Posterior cingulate gyrus (tissue), 11 donors: ENCODE measurements at regions of chr2 and their contacts with region 1.

Region 1: DNA sequence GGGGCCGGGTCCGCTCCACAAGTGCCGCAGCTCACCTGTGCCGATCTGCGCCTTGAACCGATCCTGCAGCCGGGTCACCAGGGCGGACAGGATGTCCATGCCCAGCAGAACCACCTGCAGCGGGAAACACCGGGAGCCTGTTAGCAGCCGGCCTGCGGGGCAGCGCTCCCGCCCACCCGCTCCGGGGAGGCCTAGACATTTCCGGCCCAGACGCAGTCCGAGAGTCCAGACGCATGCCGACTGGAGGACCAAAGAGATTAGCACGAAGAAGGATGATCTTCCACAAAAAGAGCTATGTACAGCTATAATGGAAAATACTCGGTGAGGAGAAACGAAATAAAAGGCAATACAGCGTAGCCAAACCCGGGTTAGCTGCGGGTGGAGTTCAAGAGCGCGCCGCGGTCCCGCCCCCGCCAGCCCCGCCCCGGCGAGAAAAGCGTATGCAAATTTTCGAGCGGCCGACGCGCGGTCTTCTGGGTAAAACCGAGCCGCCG is 421 bp upstream of the RNU4ATAC start:
- DNase-seq: peak; percentile 73 to 96 (median 82)

Region 2: GRCh38 chr2:121400201-121400600 is 130.1 kb before region 1 on chr2:
- intact Hi-C with region 1: loop called (anchors 1 kb)
- DNase-seq: no peak

Region 3: GRCh38 chr2:121722479-121722878 is 192.2 kb after region 1 on chr2:
- intact Hi-C with region 1: loop called (anchors 2 kb)
- DNase-seq: no peak

Region 4: DNA sequence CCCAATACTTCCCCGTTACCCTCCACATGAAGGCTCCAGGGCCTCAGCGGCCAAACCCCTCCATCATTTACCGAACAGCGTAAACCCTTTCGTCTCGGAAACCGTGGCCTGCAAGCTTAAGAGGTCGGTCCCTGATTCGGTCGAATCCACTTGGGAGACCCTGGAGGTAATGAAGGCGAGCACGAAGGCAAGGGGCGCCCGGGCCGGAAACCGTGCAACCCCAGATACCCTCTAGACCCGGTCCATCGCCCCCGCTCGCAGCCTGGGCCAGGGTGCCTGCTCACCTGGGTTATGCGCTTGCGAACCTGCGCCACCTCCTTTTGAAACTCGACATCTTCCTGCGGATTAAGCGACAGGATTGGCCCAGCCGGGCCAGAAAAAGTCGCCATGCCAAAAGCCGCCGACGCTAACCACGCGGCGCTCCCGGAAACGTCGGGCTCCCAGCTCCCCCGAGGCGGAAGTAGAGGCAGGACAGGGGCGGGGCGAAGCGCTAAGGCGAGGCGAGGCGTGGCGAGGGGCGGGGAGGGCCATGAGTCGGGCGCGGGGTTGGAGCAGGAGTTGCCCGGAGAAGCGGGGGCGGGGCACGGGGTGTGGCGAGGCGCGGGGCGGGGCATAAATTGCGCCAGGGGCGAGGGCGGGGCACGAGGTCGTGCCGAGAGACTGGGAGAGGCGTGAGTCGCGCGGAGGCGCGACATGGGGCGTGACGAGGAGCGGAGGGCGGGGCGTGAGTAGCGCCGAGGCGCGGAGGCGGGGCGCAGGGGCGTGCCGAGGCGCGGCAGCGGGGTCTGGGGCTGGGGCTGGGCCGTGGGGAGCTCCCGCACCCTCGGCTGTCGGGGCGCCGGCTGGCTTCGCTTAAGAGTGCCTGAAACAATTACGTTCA is 206.4 kb after region 1 on chr2 and contains the start of gene NIFK:
- intact Hi-C with region 1: loop called (anchors 5 kb)
- DNase-seq: peak; percentile 97 to 100 (median 98)

Region 5: GRCh38 chr2:121755236-121756111 is 225.2 kb after region 1 on chr2 and contains the start of gene TSN:
- intact Hi-C with region 1: loop called (anchors 1 kb)
- DNase-seq: peak; percentile 95 to 99 (median 98)

Region 6: DNA sequence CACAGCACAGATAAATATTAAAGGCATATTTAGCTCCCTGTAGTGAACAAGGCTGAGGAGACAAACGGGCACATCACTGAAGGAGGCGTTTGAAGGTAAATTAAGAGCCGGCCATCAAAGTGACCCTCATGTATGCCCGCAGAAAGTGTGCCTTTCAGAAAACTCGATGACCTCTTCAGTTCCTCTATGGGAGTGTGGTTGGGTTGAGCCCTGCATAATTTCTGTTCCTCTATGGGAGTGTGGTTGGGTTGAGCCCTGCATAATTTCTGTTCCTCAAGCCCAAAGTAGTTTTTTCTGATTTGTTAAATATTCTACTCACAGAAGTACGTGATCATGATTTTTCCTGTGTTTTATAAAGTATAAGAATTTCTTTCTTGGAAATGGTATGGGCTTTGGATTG is 793.7 kb after region 1 on chr2:
- intact Hi-C with region 1: no loop called
- DNase-seq: no peak